ENCODE measurements at regions of chr19 and their contacts with region 1.

Region 1: GRCh38 chr19:40305403-40305802 is 20.3 kb upstream of the AKT2 start:
- DNase-seq: peak; percentile 59
- H3K4me3 Mint-ChIP-seq: no peak overlapping the region
- H3K27ac Mint-ChIP-seq: no peak overlapping the region
- H3K4me1 Mint-ChIP-seq: peaks cover 3% of the 10 kb centered on the region
- H3K27me3 Mint-ChIP-seq: no peaks in the 10 kb centered on the region

Region 2: DNA sequence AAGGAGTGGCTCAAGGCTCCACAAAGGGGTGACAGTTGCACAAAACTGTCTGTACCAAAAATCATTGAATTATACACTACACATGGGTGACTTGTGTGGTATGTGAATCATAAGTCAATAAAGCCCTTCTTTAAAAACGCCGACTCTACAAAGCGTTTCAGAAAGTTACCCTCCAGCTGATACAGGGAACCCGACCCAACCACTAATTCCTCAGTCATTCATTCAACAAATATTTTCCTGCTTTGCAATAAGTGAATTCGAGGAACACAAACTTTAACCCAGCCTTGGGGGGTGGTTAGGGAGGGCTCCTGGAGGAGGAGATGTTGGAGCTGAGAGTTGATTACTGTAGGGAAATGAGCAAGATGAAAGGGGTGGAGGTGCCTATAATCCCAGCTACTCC is 327.8 kb after region 1 on chr19:
- intact Hi-C with region 1: loop called (anchors 10 kb)
- DNase-seq: no peak
- H3K4me3 Mint-ChIP-seq: no peak overlapping the region
- H3K27ac Mint-ChIP-seq: no peak overlapping the region
- H3K4me1 Mint-ChIP-seq: peaks cover 5% of the 10 kb centered on the region
- H3K27me3 Mint-ChIP-seq: peaks cover 5% of the 10 kb centered on the region